ENCODE measurements at regions of chr4 and their contacts with region 1.

Region 1: GRCh38 chr4:87006676-87007527 is 72.1 kb downstream of the AFF1 start:
- DNase-seq: peak; percentile 72 to 87
- H3K4me3 ChIP-seq: peak overlapping the region; percentile 93
- H3K27ac ChIP-seq: peak overlapping the region; percentile 85
- H3K4me1 ChIP-seq: peaks cover 45% of the 10 kb centered on the region
- H3K27me3 ChIP-seq: no peaks in the 10 kb centered on the region
- CTCF ChIP-seq: no peak; the same call in 1 of the 2 replicates

Region 2: DNA sequence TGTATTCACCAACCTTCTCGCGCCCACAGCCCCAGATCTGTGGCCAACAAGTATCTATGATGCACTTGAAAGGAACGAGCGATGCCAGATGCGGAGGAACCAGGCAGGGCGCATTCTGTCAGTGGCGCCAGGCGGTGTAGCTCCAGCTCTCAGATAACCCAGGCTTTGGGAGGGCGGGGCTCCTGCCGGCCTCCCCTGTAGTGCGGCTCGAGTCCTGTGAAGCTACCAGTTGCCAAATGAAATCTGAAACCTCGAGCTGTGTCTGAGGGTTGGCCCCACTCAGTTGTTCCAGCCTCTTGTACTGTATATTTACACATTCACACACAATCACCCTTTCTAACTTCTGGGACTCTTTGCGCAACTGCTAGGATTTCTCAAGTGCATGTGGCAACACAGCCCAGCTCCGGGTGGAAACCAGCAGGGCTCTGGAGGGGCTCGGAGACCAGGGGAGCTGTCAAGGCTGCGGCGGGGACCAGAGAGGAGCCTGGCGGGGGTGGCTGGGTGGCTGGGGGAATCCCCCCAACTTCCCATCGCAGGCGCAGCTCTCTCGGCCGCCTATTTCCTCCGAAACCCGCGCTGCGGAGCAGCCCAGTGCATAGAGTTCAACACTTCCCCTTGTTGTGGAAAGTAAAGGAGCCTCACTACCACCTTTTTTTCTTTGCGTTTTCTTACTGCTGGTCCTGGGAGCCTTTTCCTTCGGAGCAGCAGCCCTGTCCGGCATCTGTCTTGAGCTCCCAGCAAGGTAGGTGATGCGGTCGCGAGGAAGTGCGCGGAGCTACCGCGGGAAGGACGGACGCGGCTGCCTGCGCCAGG is 1531.9 kb before region 1 on chr4 and contains the start of gene ARHGAP24:
- CTCF ChIA-PET with region 1: no interaction called
- POLR2A ChIA-PET with region 1: no interaction called
- intact Hi-C with region 1: loop called (anchors 10 kb)
- DNase-seq: peak; percentile 88 to 93
- H3K4me3 ChIP-seq: peak within 1 kb of the TSS; percentile 81
- H3K27ac ChIP-seq: peak within 1 kb of the TSS; percentile 64
- H3K4me1 ChIP-seq: peaks cover 12% of the 10 kb centered on the region
- H3K27me3 ChIP-seq: no peaks in the 10 kb centered on the region
- CTCF ChIP-seq: no peak
- total RNA-seq, gene ARHGAP24: 2.2 and 5.4 TPM in 2 replicates

Region 3: DNA sequence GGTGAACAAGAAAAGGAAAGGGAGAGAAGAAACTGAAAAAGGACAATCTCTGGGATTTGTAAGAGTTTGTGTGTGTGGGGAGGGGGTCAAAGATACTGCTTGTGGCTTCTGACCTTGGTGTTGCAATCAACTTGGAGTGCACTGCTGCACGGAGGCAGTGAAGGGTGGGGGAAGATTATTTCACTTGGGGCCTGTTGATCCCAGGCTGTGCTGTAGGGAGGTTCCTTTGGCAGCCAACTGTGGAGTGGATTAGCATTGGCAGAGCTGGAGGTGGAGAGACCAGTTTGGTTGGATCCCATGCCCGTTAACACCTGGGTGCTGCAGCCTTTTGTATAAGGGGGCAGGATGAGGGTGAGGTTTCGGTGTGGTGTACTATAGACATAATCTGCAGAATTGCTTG is 33.9 kb before region 1 on chr4:
- CTCF ChIA-PET with region 1: no interaction called
- POLR2A ChIA-PET with region 1: interaction called, 10 read pairs
- intact Hi-C with region 1: no loop called
- DNase-seq: peak; percentile 66 to 69
- H3K4me3 ChIP-seq: no peak overlapping the region
- H3K27ac ChIP-seq: peak overlapping the region; percentile 43
- H3K4me1 ChIP-seq: peaks cover 29% of the 10 kb centered on the region
- H3K27me3 ChIP-seq: no peaks in the 10 kb centered on the region
- CTCF ChIP-seq: no peak

Region 4: GRCh38 chr4:87093443-87094123 is 86.7 kb after region 1 on chr4:
- CTCF ChIA-PET with region 1: no interaction called
- POLR2A ChIA-PET with region 1: no interaction called
- intact Hi-C with region 1: loop called (anchors 5 kb)
- DNase-seq: no peak
- H3K4me3 ChIP-seq: no peak overlapping the region
- H3K27ac ChIP-seq: peak overlapping the region; percentile 82
- H3K4me1 ChIP-seq: peaks cover 27% of the 10 kb centered on the region
- H3K27me3 ChIP-seq: no peaks in the 10 kb centered on the region
- CTCF ChIP-seq: peak; percentile 50

Region 5: DNA sequence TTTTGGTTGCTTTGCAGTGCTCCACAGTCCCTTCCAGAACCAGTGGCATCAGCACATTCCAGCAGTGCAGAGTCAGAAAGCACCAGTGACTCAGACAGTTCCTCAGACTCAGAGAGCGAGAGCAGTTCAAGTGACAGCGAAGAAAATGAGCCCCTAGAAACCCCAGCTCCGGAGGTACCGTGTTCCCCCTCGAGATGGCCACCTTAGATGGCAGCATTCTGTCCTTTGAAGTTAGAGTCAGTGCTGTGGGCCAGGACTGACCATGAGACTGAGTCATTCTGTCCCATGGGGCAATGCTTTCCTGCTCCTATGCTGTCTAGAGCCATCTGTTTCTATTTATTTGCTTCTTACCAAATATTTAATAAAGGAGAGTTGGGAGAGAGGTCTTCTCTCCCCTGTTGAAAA is 101.2 kb after region 1 on chr4:
- CTCF ChIA-PET with region 1: no interaction called
- POLR2A ChIA-PET with region 1: interaction called, 3 read pairs
- intact Hi-C with region 1: loop called (anchors 5 kb)
- DNase-seq: peak; percentile 51 to 59
- H3K4me3 ChIP-seq: no peak overlapping the region
- H3K27ac ChIP-seq: peak overlapping the region; percentile 49
- H3K4me1 ChIP-seq: peaks cover 34% of the 10 kb centered on the region
- H3K27me3 ChIP-seq: no peaks in the 10 kb centered on the region
- CTCF ChIP-seq: no peak

Region 6: DNA sequence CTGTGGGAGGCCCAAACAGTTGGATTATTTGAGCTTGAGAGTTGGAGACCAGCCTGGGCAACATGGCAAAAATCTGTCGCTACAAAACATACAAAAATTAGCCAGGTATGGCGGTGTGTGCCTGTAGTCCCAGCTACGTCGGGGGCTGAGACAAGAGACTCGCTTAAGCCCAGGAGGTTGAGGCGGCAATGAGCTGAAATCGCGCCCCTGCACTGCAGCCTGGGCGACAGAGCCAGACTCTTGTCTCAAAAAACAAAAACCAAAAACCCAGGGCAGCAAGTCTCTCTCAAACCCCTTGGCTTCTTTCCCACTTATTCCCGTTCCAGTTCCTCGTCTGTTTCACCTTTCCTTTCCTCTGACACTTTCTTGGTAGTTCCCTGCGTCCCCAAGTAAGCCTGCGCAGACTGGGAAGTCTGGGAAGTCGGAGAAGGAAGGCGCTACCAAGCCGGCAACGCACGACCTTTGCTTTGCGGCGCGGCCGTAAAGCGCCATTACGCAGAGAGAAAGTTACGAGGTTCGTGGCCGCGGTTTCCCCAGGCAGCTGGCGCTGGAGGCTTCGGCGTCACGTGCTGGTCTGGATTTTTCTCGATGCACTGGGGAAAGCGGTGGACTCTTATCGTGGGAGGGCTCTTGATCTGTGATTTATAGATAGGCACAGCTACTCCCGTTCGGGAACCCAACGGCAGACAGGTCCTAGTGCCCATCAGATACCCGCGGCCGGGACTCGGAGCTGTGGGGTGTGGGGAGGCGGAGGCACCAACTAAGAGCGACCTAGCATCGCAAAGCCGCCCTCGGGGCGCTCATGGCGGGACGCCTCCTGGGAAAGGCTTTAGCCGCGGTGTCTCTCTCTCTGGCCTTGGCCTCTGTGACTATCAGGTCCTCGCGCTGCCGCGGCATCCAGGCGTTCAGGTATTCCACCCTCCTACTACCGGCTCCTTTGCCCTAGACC is 415.5 kb after region 1 on chr4 and contains the start of gene NUDT9:
- CTCF ChIA-PET with region 1: no interaction called
- POLR2A ChIA-PET with region 1: no interaction called
- intact Hi-C with region 1: no loop called
- DNase-seq: peak; percentile 74 to 83
- H3K4me3 ChIP-seq: peak within 1 kb of the TSS; percentile 87
- H3K27ac ChIP-seq: peak within 1 kb of the TSS; percentile 80
- H3K4me1 ChIP-seq: peaks cover 13% of the 10 kb centered on the region; the same call in 1 of the 2 replicates
- H3K27me3 ChIP-seq: no peaks in the 10 kb centered on the region
- CTCF ChIP-seq: no peak
- total RNA-seq, gene NUDT9: 14.7 and 15.3 TPM in 2 replicates

Measured in PC-9 (cell line).